Cardiac septum (tissue), 1 donor: ENCODE measurements at regions of chr5 and their contacts with region 1.

Region 1: GRCh38 chr5:56358703-56359681 is 125.9 kb upstream of the ANKRD55 start:
- DNase-seq: no peak

Region 2: GRCh38 chr5:55993013-55993412 is 366.0 kb before region 1 on chr5:
- intact Hi-C with region 1: no loop called
- DNase-seq: no peak

Region 3: GRCh38 chr5:56460679-56461191 is 101.7 kb after region 1 on chr5:
- intact Hi-C with region 1: loop called (anchors 5 kb)
- DNase-seq: no peak